ENCODE measurements at regions of chr3 and their contacts with region 1.

Region 1: GRCh38 chr3:194333212-194333980 is 17.7 kb downstream of the CPN2 start:
- DNase-seq: peak; percentile 93
- H3K4me3 ChIP-seq: peak overlapping the region; percentile 57
- H3K27ac ChIP-seq: peak overlapping the region; percentile 21
- H3K4me1 ChIP-seq: peaks cover 20% of the 10 kb centered on the region
- H3K27me3 ChIP-seq: no peaks in the 10 kb centered on the region
- CTCF ChIP-seq: peak; percentile 98

Region 2: GRCh38 chr3:194296454-194297263 is 36.7 kb before region 1 on chr3:
- CTCF ChIA-PET with region 1: no interaction called
- POLR2A ChIA-PET with region 1: no interaction called
- intact Hi-C with region 1: no loop called
- DNase-seq: peak; percentile 78
- H3K4me3 ChIP-seq: no peak overlapping the region
- H3K27ac ChIP-seq: peak overlapping the region; percentile 61
- H3K4me1 ChIP-seq: peaks cover 14% of the 10 kb centered on the region
- H3K27me3 ChIP-seq: no peaks in the 10 kb centered on the region
- CTCF ChIP-seq: no peak

Region 3: GRCh38 chr3:194404365-194405140 is 71.2 kb after region 1 on chr3:
- CTCF ChIA-PET with region 1: no interaction called
- POLR2A ChIA-PET with region 1: no interaction called
- intact Hi-C with region 1: loop called (anchors 1 kb)
- DNase-seq: peak; percentile 79
- H3K4me3 ChIP-seq: no peak overlapping the region
- H3K27ac ChIP-seq: no peak overlapping the region
- H3K4me1 ChIP-seq: peaks cover 3% of the 10 kb centered on the region
- H3K27me3 ChIP-seq: no peaks in the 10 kb centered on the region
- CTCF ChIP-seq: peak; percentile 85

Region 4: DNA sequence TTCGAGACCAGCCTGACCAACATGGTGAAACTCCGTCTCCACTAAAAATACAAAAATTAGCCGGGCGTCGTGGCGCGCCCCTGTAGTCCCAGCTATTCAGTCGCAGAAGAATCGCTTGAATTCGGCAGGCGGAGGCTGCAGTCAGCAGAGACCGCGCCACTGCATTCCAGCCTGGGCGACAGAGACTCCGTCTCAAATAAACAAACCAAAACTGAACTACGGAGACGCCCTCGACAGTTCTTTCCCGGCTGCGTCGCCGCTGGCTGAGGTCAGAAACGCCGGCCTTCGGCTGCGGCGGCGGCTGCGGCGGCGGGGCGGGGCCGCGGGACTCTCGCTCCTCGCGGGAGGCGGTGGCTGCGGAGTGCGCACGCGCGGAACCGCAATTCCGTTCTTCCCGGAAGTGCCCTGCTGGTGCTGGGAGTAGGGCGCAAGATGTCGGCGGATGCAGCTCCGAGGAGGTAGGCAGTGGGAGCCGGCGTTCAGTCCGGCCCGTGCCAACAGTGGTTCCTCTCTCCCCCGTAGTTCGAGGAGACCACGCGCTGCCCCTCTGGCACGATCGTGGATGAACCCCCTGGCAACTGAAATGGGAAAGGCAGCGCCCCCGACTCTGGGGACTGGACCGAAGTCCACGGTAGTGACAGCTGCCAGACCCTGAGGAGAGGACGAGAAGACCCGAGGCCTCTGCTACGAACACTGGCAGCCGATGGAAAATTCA is 250.4 kb after region 1 on chr3:
- CTCF ChIA-PET with region 1: interaction called, 10 read pairs
- POLR2A ChIA-PET with region 1: no interaction called
- intact Hi-C with region 1: no loop called
- DNase-seq: peak; percentile 94
- H3K4me3 ChIP-seq: peak overlapping the region; percentile 88
- H3K27ac ChIP-seq: peak overlapping the region; percentile 90
- H3K4me1 ChIP-seq: peaks cover 6% of the 10 kb centered on the region
- H3K27me3 ChIP-seq: no peaks in the 10 kb centered on the region
- CTCF ChIP-seq: no peak

Region 5: DNA sequence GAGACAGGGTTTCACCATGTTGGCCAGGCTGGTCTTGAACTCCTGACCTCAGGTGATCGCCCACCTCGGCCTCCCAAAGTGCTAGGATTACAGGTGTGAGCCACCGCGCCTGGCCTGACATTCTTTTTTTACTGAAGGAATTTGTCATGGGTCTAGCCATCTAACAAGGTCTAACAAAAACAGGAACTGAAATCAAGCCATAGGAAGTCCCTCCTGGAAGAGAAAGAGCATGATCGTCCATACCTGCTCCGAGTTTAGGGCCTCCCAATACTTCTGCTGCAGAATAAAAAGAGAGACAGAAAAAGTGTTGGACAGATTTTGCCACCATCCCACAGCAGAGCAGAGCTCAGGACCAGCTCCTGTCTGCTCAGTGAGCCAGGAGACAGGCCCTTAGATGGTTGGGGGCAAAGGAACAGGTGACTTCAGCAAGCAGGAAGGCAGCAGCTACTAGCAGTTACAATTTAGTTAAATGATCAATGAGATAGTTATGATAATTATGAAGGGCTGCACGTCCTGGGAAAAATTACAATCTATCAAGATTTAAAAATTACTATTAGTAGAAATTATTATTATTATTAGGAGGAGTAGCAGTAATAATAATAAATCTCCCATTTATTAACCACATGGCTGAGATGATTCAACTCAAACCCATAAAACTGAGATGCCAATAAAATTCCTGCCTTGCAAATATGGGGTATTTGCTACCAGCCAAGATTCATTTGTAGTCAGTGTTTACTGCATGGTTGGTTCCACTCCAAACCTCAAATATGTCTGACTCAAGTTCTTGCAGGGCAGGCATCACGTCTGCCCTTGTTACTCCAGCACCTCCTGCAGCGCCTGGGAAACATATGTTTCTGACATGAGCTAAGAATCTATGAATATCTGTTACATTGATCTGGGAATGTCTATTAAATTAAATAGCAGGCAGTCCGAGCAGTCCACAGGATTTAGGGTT is 259.7 kb after region 1 on chr3:
- CTCF ChIA-PET with region 1: interaction called, 4 read pairs
- POLR2A ChIA-PET with region 1: no interaction called
- intact Hi-C with region 1: loop called (anchors 2 kb)
- DNase-seq: peak; percentile 94
- H3K4me3 ChIP-seq: no peak overlapping the region
- H3K27ac ChIP-seq: peak overlapping the region; percentile 58
- H3K4me1 ChIP-seq: peaks cover 8% of the 10 kb centered on the region
- H3K27me3 ChIP-seq: no peaks in the 10 kb centered on the region
- CTCF ChIP-seq: no peak

Region 6: DNA sequence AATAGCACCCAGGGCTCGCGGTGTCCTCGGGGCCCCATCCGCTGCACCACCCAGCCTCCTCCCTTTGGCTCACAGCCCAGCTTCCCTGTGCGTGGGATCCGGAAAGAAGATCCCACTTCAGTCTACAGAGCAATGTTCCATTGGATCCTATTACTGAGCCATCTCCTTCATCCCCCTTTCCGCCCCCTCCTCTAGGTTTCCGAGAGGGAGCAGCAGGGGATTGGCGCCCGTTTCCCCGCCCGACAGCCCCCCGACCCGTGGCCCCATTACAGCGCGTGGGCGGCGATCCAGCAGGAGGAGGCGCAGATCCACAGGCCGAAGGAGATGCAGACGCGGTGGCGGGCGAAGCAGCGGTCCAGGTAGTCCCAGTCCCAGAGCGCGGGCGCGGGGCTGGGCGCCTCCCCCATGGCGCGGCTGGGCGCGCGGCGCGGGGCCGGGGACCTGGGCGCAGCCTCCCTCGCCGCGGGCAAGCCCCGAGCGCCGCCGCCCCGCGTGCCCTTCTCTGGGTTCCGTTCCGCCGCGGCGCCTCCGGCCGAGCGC is 299.5 kb after region 1 on chr3:
- CTCF ChIA-PET with region 1: no interaction called
- POLR2A ChIA-PET with region 1: no interaction called
- intact Hi-C with region 1: loop called (anchors 10 kb)
- DNase-seq: peak; percentile 78
- H3K4me3 ChIP-seq: peak overlapping the region; percentile 84
- H3K27ac ChIP-seq: peak overlapping the region; percentile 77
- H3K4me1 ChIP-seq: no peaks in the 10 kb centered on the region
- H3K27me3 ChIP-seq: no peaks in the 10 kb centered on the region
- CTCF ChIP-seq: no peak